ENCODE measurements at regions of chr15 and their contacts with region 1.

Region 1: DNA sequence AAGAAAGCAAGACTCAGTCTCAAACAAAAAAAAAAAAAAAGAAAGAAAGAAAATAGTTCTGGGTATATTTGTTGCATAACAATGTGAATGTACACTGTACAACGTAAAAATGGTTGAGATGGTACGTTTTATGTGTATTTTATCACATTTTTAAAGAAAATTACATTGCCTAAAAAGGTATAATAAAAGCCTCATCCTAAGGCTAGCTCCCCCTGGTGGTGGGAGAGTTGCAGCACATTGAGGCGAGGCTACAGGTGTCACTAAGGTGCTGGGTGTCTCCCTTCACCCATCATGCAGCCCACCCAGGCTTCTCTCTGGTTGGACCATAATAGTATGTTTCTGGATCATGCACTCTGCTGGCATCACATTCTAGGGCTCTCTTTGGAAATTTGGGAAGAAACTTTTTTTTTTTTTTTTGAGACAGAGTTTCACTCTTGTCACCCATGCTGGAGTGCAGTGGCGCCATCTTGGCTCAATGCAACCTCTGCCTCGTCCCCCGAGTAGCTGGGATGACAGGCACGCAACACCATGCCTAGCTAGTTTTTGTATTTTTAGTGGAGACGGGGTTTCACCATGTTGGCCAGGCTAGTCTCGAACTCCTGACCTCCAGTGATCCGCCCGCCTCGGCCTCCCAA is 12.4 kb upstream of the RAB11A start:
- H3K4me3 ChIP-seq: no peak overlapping the region
- H3K27ac ChIP-seq: no peak overlapping the region
- H3K4me1 ChIP-seq: peaks cover 5% of the 10 kb centered on the region; the same call in 1 of the 2 replicates
- CTCF ChIP-seq: peak; percentile 73

Region 2: DNA sequence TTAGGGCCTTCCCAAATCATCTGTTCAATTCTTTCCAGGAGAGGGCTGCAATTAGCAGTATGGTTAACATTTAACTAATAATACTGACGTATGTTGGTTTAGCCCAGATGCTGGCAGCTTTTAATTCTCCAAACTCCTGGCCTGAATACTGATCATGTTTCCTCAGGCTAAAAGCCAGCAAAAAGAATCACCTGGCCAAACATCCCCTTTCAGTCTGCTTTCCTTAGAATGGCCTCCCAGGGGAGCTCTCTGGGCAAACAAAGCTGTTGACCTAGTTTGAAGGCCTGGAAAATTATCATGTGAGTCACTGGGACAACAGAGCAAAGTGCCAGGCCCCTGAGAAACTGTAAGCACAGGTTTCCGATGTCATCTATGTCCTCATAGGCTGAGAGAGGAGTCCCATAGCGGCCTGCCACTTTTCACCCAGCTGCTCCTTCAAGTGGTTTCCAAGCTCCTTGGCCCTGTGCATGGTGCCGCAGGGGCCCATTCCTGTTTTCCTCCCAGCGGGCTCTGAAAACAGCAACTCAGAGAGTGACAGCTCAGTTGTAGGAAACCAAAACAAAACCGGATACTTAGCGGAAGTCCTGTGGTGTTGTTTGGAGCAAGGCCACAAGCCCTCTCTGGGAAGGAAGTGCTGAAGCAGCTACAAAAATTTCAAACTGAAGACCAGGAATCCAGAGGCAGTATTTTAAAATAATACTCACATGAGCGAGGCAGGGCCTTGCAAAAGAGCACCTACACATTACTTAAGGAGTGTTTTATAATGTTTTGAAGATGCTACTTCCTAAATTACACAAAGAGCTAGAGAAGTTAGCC is 24.2 kb before region 1 on chr15:
- CTCF ChIA-PET with region 1: interaction called, 15 read pairs
- POLR2A ChIA-PET with region 1: no interaction called
- H3K4me3 ChIP-seq: no peak overlapping the region
- H3K27ac ChIP-seq: peak overlapping the region; percentile 79
- H3K4me1 ChIP-seq: peaks cover 15% of the 10 kb centered on the region
- CTCF ChIP-seq: 0 out of 2 replicates have a peak, but pooled peaks have one; percentile 31

Region 3: DNA sequence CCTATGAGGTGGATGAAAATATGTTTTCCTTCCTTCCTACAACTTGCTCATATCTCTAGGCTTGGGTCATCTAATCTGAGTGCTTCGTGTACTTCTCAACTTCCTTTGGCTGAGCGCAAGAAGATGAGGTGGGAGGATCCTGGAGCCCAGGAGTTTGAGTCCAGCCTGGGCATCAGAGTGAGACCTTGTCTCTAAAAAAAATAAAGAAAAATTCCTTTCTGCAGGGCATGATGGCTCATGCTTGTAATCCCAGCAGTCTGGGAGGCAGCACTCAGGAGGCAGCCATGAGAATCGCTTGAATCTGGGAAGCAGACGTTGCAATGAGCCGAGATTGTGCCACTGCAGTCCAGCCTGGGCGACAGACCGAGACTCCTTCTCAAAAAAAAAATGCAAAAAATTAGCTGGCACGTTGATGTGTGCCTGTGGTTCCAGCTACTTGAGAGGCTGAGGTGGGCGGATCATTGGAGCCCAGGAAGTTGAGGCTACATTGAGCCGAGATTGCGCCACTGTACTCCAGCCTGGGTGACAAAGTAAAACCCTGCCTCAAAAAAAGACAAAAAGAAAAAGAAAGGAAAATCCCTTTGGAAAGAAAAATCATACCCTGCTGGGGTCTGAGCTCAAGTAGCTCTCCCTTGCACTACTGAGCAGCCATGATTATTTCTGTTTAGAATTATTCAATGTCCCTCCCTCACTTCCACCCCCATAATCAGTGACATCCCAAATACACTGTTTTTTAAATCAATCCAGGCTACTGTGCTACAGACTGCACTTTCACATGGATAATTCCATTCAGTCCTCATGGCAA is 15.6 kb before region 1 on chr15:
- CTCF ChIA-PET with region 1: interaction called, 34 read pairs
- POLR2A ChIA-PET with region 1: no interaction called
- H3K4me3 ChIP-seq: no peak overlapping the region; the same call in 1 of the 2 replicates
- H3K27ac ChIP-seq: peak overlapping the region; percentile 27; the same call in 1 of the 2 replicates
- H3K4me1 ChIP-seq: no peaks in the 10 kb centered on the region
- CTCF ChIP-seq: no peak

Region 4: GRCh38 chr15:65869127-65869953 is 12.4 kb after region 1 on chr15 and contains the start of gene RAB11A:
- CTCF ChIA-PET with region 1: interaction called, 44 read pairs
- POLR2A ChIA-PET with region 1: interaction called, 11 read pairs
- H3K4me3 ChIP-seq: peak within 1 kb of the TSS; percentile 94
- H3K27ac ChIP-seq: peak within 1 kb of the TSS; percentile 94
- H3K4me1 ChIP-seq: 0 out of 2 replicates have a peak, but pooled peaks cover 4% of the 10 kb centered on the region
- CTCF ChIP-seq: peak; percentile 97

Measured in HEK293 (cell line).